Caco-2 (cell line): ENCODE measurements at regions of chr18 and their contacts with region 1.

Region 1: DNA sequence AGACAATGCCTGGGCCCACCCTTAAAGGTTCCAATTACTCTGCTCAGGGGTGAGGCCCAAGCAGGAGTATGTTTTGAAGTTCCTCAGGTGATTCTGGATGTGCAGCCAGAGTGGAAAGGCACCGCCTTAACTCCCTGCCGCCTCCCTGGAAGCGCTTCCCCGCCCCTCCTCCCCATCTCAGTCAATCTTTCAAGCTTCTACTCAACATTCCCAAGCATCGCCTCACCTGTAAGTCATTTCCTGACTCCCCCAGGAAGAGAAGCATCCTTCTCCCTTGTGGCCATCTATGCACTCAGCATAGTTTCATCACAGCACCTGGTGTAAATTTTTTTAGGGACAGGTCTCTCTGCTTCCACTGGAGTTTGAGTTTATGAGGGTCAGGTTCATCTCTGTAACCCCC is 67.5 kb downstream of the MYL12B start:
- DNase-seq: peak in 1 of 2 experiments; percentile 67
- H3K4me3 ChIP-seq: no peak overlapping the region
- H3K4me3 Mint-ChIP-seq: peak overlapping the region; percentile 55
- H3K27ac Mint-ChIP-seq: peak overlapping the region; percentile 88
- H3K4me1 ChIP-seq: peaks cover 26% of the 10 kb centered on the region
- H3K4me1 Mint-ChIP-seq: peaks cover 28% of the 10 kb centered on the region
- H3K27me3 ChIP-seq: no peaks in the 10 kb centered on the region
- H3K27me3 Mint-ChIP-seq: no peaks in the 10 kb centered on the region
- CTCF ChIP-seq: no peak

Region 2: GRCh38 chr18:3261371-3262246 is 67.9 kb before region 1 on chr18 and contains the start of gene MYL12B:
- CTCF ChIA-PET with region 1: no interaction called
- POLR2A ChIA-PET with region 1: no interaction called
- intact Hi-C with region 1: no loop called
- DNase-seq: peak; percentile 83 to 89
- H3K4me3 ChIP-seq: peak within 1 kb of the TSS; percentile 97
- H3K4me3 Mint-ChIP-seq: peak within 1 kb of the TSS; percentile 84
- H3K27ac Mint-ChIP-seq: peak within 1 kb of the TSS; percentile 99
- H3K4me1 ChIP-seq: peaks cover 54% of the 10 kb centered on the region
- H3K4me1 Mint-ChIP-seq: peaks cover 38% of the 10 kb centered on the region
- H3K27me3 ChIP-seq: no peaks in the 10 kb centered on the region
- H3K27me3 Mint-ChIP-seq: no peaks in the 10 kb centered on the region
- CTCF ChIP-seq: no peak
- total RNA-seq, gene MYL12B: 457 and 467 TPM in 2 replicates

Region 3: GRCh38 chr18:3526421-3527354 is 197.2 kb after region 1 on chr18:
- CTCF ChIA-PET with region 1: no interaction called
- POLR2A ChIA-PET with region 1: interaction called, 14 read pairs
- intact Hi-C with region 1: no loop called
- DNase-seq: peak; percentile 37 to 59
- H3K4me3 ChIP-seq: no peak overlapping the region
- H3K4me3 Mint-ChIP-seq: peak overlapping the region; percentile 45
- H3K27ac Mint-ChIP-seq: peak overlapping the region; percentile 50
- H3K4me1 ChIP-seq: peaks cover 11% of the 10 kb centered on the region
- H3K4me1 Mint-ChIP-seq: peaks cover 10% of the 10 kb centered on the region
- H3K27me3 ChIP-seq: no peaks in the 10 kb centered on the region
- H3K27me3 Mint-ChIP-seq: no peaks in the 10 kb centered on the region
- CTCF ChIP-seq: no peak